ENCODE measurements at regions of chr17 and their contacts with region 1.

Region 1: DNA sequence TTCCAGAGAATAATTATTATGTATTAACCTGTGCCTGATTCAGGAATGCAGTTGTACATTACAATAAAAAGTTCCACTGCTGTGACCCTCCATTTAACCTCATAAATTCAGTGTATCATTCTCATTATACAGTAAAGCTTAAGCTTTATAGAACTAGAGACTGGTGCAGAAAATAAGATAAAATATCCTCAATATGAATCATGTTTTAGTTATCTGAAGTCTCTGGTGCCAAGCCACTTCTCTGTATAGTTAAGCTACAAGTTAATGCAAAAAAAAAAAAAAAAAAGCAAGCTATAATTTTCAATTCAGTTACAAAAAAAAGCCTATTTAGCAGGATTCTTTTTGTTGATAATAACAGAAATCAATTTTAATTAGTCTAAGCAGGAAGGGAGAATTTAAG is 22.4 kb upstream of the SMIM36 start:
- DNase-seq: no peak
- ATAC-seq: no peak
- H3K4me3 ChIP-seq: no peak overlapping the region
- H3K27ac ChIP-seq: no peak overlapping the region
- H3K4me1 ChIP-seq: no peaks in the 10 kb centered on the region
- H3K27me3 ChIP-seq: no peaks in the 10 kb centered on the region
- CTCF ChIP-seq: no peak
- POLR2A ChIP-seq: no peak

Region 2: GRCh38 chr17:55580596-55581133 is 47.1 kb after region 1 on chr17:
- intact Hi-C with region 1: no loop called
- DNase-seq: no peak
- ATAC-seq: no peak
- H3K4me3 ChIP-seq: no peak overlapping the region
- H3K27ac ChIP-seq: no peak overlapping the region
- H3K4me1 ChIP-seq: peaks cover 0 to 35% (median 0%) of the 10 kb centered on the region in 12 donors
- H3K27me3 ChIP-seq: no peaks in the 10 kb centered on the region
- CTCF ChIP-seq: no peak
- POLR2A ChIP-seq: no peak

Region 3: GRCh38 chr17:55601874-55602364 is 68.3 kb after region 1 on chr17:
- intact Hi-C with region 1: loop called in 7 of 10 experiments (anchors 5 to 10 kb)
- DNase-seq: no peak
- ATAC-seq: no peak
- H3K4me3 ChIP-seq: no peak overlapping the region
- H3K27ac ChIP-seq: no peak overlapping the region
- H3K4me1 ChIP-seq: no peaks in the 10 kb centered on the region
- H3K27me3 ChIP-seq: no peaks in the 10 kb centered on the region
- CTCF ChIP-seq: peak; percentile 17 to 56 (median 44)
- POLR2A ChIP-seq: no peak

Region 4: GRCh38 chr17:55664287-55664686 is 130.7 kb after region 1 on chr17:
- intact Hi-C with region 1: no loop called
- DNase-seq: no peak
- ATAC-seq: peak in 1 of 4 donors; percentile 64
- H3K4me3 ChIP-seq: no peak overlapping the region
- H3K27ac ChIP-seq: no peak overlapping the region
- H3K4me1 ChIP-seq: peaks cover 0 to 11% (median 0%) of the 10 kb centered on the region in 12 donors
- H3K27me3 ChIP-seq: peaks cover 0 to 7% (median 0%) of the 10 kb centered on the region in 9 donors
- CTCF ChIP-seq: no peak
- POLR2A ChIP-seq: no peak